K562 (cell line): ENCODE measurements at regions of chr3 and their contacts with region 1.

Region 1: DNA sequence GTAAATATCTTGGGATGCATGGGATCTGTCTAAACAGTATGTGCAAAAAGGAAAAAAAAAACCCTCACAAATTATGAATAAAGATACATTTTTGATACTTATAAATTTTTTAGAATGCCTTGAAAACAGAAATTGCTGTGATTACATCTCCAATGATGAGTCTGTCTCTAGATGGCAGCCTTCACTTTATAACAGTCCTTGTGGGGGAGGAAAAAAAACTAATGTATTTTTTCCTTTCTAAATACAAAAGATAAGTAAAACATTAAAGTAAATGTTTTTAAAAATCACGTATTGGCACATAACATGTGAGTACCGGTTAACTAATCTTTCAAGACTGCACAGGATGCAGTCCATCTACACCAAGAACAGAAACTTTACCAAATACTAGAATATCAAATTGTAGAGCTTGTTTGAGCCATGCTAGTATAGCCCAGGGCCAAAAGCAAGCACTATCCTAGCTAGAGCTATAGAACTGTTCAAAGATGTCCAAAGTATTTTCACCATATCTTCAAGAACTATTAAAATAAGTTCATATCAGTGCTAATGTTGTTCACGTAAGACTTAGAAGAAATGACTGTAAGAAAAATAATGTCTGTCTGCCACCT is 206.4 kb downstream of the STAG1 start:
- DNase-seq: peak in 2 of 4 experiments; percentile 2 to 3
- ATAC-seq: no peak
- H3K4me3 ChIP-seq: no peak overlapping the region
- H3K27ac ChIP-seq: no peak overlapping the region
- H3K4me1 ChIP-seq: no peaks in the 10 kb centered on the region
- H3K27me3 ChIP-seq: no peaks in the 10 kb centered on the region
- CTCF ChIP-seq: peak in 2 of 3 experiments; percentile 20 to 47; a peak in 3 of 6 replicates
- EP300 ChIP-seq: no peak
- POLR2A ChIP-seq: no peak
- RAD21 ChIP-seq: peak; percentile 40 to 63

Region 2: DNA sequence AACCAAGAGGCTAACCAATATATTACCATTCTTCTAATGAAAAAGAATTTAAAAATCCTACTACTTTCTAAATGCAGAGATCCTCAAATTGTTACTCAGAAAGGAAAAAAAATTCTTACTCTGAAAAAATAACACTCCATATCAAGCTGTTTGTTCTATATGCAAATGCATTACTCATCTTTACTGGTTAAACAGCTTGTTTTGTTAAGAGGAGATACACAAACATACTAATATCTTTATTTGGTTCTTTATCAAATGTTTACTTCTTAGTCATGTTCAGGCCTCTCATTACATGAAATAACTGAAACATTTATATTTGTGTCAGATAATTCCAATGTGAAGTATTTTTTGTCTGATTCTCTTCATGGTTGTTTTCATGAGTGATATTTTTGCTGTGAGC is 148.8 kb before region 1 on chr3:
- CTCF ChIA-PET with region 1: no interaction called
- POLR2A ChIA-PET with region 1: no interaction called
- in situ Hi-C with region 1: no loop called
- intact Hi-C with region 1: loop called (anchors 10 kb)
- DNase-seq: no peak
- ATAC-seq: no peak
- H3K4me3 ChIP-seq: no peak overlapping the region
- H3K27ac ChIP-seq: no peak overlapping the region
- H3K4me1 ChIP-seq: no peaks in the 10 kb centered on the region
- H3K27me3 ChIP-seq: no peaks in the 10 kb centered on the region
- CTCF ChIP-seq: no peak
- EP300 ChIP-seq: no peak
- POLR2A ChIP-seq: no peak
- RAD21 ChIP-seq: no peak

Region 3: DNA sequence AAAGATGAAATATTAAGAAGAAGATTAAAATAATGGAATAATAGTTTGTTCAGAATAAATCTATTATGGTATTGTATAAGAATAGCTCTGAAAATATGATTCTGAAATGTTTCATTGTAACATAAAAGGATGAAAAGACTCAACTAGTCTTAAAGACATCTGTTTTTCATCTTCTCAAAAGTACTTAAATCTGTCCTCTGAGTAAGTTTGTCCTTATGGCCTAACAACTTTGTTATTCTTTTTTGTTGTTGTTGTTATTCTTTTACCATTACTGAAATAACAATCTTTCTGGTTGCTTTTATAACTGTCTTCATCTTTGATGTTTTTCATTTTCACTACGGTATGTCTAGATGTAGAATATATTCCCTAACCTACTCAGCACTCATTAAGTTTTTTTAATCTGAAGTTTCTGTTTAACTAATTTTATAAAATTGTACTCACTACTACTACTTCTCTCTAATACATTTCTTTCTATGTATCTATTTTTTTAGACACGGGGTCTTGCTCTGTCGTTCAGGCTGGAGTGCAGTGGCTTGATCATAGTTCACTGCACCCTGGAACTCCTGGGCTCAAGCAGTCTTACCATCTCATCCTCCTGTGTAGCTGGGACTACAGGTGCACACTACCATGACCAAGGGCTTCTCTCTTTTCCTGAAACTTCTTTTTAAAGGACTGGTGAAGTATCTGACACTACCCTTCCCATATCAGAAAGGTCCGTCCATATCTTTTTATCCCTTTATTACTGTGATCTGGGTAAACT is 54.9 kb before region 1 on chr3:
- CTCF ChIA-PET with region 1: no interaction called
- POLR2A ChIA-PET with region 1: no interaction called
- in situ Hi-C with region 1: no loop called
- intact Hi-C with region 1: no loop called
- DNase-seq: no peak
- ATAC-seq: no peak
- H3K4me3 ChIP-seq: no peak overlapping the region
- H3K27ac ChIP-seq: no peak overlapping the region
- H3K4me1 ChIP-seq: no peaks in the 10 kb centered on the region
- H3K27me3 ChIP-seq: no peaks in the 10 kb centered on the region
- CTCF ChIP-seq: no peak
- EP300 ChIP-seq: no peak
- POLR2A ChIP-seq: no peak
- RAD21 ChIP-seq: no peak